Activated naive CD4-positive, alpha-beta T cell treated with anti-CD3 and anti-CD28 coated beads for 36 hours (primary cell): ENCODE measurements at regions of chr1 and their contacts with region 1.

Region 1: DNA sequence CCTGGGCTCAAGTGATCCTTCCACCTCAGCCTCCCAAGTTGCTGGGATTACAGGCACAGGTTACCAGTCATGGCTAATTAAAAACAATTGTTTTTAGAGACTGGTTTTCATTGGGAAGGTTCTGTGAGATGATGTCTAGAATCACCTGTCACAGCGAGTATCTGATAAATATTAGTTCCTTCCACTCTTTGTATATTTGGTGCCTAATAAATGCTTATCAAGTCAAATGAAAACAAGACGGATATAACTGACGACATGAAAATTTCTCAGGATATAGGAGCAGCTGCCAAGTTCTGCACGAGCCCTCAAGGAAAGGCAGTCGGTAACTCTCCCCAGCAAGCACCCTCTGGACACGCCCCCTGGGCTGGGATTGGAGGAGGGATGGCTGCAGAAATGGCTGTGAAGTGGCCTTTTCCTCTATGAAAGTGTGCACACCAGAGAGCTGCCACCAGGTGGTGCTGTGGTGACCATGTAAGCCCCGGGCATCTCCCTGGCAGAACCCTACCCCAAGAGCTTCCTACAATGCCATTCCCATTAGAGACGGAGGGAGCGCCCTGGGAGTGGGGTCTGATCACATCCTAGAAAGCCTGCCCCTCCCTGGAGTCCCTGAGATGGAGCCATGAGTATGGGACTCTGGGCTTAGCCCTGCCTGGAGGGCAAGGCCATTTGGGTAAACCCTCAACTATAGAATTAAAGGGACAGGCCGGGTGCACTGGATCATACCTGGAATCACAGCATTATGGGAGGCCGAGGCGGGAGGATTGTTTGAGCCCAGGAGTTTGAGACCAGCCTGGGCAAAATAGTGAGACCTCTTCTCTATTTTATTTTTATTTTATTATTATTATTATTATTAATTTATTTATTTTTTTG is 50.9 kb downstream of the HTR6 start:
- DNase-seq: peak; percentile 94
- H3K4me3 Mint-ChIP-seq: no peak overlapping the region
- H3K27ac Mint-ChIP-seq: no peak overlapping the region
- H3K4me1 Mint-ChIP-seq: peaks cover 30% of the 10 kb centered on the region
- H3K27me3 Mint-ChIP-seq: no peaks in the 10 kb centered on the region

Region 2: GRCh38 chr1:19010995-19011844 is 704.3 kb before region 1 on chr1:
- CTCF ChIA-PET with region 1: no interaction called
- intact Hi-C with region 1: loop called (anchors 2 kb)
- DNase-seq: peak; percentile 95
- H3K4me3 Mint-ChIP-seq: no peak overlapping the region
- H3K27ac Mint-ChIP-seq: peak overlapping the region; percentile 83
- H3K4me1 Mint-ChIP-seq: peaks cover 35% of the 10 kb centered on the region
- H3K27me3 Mint-ChIP-seq: no peaks in the 10 kb centered on the region

Region 3: DNA sequence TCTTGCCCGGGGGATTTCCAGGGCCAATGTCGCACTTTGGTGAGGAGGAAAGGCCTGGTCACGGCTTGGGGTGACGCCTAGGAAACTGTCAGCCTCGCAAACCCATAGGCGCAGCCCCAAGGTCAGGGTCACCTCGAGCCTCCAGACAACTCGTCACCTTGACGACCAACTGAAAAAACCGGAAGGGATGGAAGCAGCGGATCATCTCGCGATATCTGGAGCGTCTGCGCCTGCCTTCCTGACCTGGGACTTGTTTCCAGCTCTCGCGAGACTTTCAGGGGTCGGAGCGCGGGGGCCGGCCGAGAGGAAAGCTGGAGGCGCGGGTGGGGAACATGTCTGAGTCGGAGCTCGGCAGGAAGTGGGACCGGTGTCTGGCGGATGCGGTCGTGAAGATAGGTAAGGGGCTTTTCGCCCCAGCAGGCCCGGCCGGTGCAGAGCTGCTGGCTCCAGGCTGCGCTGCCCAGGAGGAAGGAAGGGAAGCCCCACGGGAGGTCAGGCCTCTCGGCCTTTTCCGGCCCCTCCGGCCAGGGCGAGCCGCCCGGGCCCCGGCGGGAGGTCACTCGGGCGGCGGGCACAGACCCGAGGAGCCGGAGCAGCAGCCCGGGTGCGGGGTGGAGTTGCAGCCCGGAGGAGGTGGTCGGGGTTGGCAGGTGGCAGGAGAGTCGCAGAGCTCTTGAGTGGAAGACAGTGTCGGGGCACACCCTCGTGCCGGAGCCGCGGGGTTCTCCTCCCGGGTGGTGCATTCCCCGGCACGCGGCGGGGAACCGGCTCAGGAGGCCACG is 118.7 kb before region 1 on chr1:
- CTCF ChIA-PET with region 1: no interaction called
- intact Hi-C with region 1: loop called (anchors 1 kb)
- DNase-seq: peak; percentile 99
- H3K4me3 Mint-ChIP-seq: peak overlapping the region; percentile 94
- H3K27ac Mint-ChIP-seq: peak overlapping the region; percentile 97
- H3K4me1 Mint-ChIP-seq: peaks cover 39% of the 10 kb centered on the region
- H3K27me3 Mint-ChIP-seq: no peaks in the 10 kb centered on the region

Region 4: GRCh38 chr1:19762175-19762779 is 46.7 kb after region 1 on chr1:
- CTCF ChIA-PET with region 1: interaction called, 5 read pairs
- intact Hi-C with region 1: loop called (anchors 1 kb)
- DNase-seq: peak; percentile 52
- H3K4me3 Mint-ChIP-seq: no peak overlapping the region
- H3K27ac Mint-ChIP-seq: no peak overlapping the region
- H3K4me1 Mint-ChIP-seq: peaks cover 16% of the 10 kb centered on the region
- H3K27me3 Mint-ChIP-seq: no peaks in the 10 kb centered on the region

Region 5: GRCh38 chr1:19882111-19883071 is 166.8 kb after region 1 on chr1 and contains the start of gene OTUD3:
- CTCF ChIA-PET with region 1: interaction called, 3 read pairs
- intact Hi-C with region 1: loop called (anchors 1 kb)
- DNase-seq: peak; percentile 96
- H3K4me3 Mint-ChIP-seq: peak within 1 kb of the TSS; percentile 83
- H3K27ac Mint-ChIP-seq: peak within 1 kb of the TSS; percentile 42
- H3K4me1 Mint-ChIP-seq: peaks cover 37% of the 10 kb centered on the region
- H3K27me3 Mint-ChIP-seq: no peaks in the 10 kb centered on the region
- total RNA-seq, gene OTUD3: 8.3 to 10.8 TPM

Region 6: DNA sequence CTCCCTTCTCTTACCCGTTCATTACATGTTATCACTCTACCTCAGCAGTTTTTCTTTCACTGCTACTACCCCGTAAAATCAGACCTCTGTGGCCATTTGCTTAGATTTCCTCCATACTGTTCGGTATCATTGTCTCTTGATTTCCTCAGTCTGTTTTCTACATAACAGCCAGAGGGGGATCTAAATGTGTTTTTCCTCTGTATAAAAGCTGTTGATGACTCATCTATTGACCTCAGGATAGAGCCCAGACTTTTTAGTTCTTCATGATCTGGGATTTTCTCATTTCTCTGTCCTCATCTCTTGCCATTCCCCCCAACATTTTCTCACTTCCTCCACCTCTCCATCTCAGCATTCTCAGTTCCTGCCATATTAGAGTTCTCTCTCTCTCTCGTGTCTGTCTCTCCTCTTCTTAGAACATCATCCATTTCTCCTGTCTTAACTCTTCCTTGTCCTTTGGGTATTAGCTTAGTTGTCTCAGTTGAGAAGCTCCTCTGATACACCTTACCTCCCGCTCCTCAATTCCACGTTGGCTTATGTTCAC is 177.1 kb after region 1 on chr1:
- CTCF ChIA-PET with region 1: no interaction called
- intact Hi-C with region 1: no loop called
- DNase-seq: no peak
- H3K4me3 Mint-ChIP-seq: no peak overlapping the region
- H3K27ac Mint-ChIP-seq: no peak overlapping the region
- H3K4me1 Mint-ChIP-seq: peaks cover 12% of the 10 kb centered on the region
- H3K27me3 Mint-ChIP-seq: no peaks in the 10 kb centered on the region

Region 7: GRCh38 chr1:19903600-19903999 is 188.0 kb after region 1 on chr1:
- CTCF ChIA-PET with region 1: no interaction called
- intact Hi-C with region 1: no loop called
- DNase-seq: no peak
- H3K4me3 Mint-ChIP-seq: no peak overlapping the region
- H3K27ac Mint-ChIP-seq: no peak overlapping the region
- H3K4me1 Mint-ChIP-seq: no peaks in the 10 kb centered on the region
- H3K27me3 Mint-ChIP-seq: no peaks in the 10 kb centered on the region

Region 8: GRCh38 chr1:20322081-20322824 is 606.7 kb after region 1 on chr1:
- CTCF ChIA-PET with region 1: no interaction called
- intact Hi-C with region 1: loop called (anchors 10 kb)
- DNase-seq: peak; percentile 63
- H3K4me3 Mint-ChIP-seq: peak overlapping the region; percentile 7
- H3K27ac Mint-ChIP-seq: peak overlapping the region; percentile 73
- H3K4me1 Mint-ChIP-seq: peaks cover 28% of the 10 kb centered on the region
- H3K27me3 Mint-ChIP-seq: peaks cover 2% of the 10 kb centered on the region